ENCODE measurements at regions of chr4 and their contacts with region 1.

Region 1: GRCh38 chr4:53365486-53366300 is at the start of gene SCFD2:
- DNase-seq: peak; percentile 95

Region 2: GRCh38 chr4:53377319-53378170 is 11.9 kb after region 1 on chr4 and contains the start of gene FIP1L1:
- CTCF ChIA-PET with region 1: no interaction called
- POLR2A ChIA-PET with region 1: interaction called, 14 read pairs
- DNase-seq: peak; percentile 96

Region 3: DNA sequence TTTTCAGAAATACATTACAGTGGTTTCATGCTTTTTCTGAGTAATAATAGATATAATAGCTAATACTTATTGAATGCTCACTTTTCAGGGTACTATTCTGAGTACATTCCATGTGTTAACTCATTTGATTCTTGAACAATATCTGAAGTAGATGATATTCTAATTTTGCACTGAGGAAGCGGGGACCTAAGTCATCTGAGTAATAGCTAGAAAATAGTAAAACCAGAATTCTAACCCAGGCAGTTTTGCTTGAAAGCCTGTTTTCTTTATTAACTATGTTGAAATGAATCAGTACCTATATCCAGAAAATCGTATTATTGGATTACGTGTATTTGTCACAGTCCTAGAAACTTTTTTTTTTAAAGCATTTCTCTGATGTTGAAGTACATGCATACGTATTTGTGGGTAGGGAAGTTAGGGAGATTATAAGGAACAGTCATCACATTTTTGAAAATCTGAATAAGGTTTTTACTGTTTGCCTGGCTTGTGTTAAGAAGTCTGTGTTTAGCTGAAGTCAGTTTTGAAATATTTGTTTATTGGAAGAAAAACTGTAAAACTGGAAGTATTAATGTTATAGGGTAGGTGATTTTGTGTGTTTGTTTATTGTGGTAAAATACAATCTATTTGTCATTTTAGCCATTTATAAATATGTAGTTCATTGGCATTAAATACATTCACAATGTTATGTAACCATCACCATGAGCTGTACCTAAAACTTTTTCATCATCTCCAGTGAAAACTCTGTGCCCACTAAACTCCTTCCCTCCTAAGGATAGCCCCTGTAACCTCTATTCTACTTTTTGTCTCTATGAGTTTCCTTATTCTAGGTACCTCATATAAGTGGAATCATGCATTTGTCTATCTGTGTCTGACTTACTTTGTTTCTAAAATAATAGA is 67.1 kb after region 1 on chr4:
- CTCF ChIA-PET with region 1: no interaction called
- POLR2A ChIA-PET with region 1: no interaction called
- DNase-seq: no peak